Activated B cell treated with CpG ODN at 0.5 μM for 24 hours (primary cell): ENCODE measurements at regions of chr13 and their contacts with region 1.

Region 1: GRCh38 chr13:48769107-48769704 is 115.5 kb downstream of the CYSLTR2 start:
- DNase-seq: peak; percentile 25
- ATAC-seq: peak; percentile 100
- H3K4me3 Mint-ChIP-seq: no peak overlapping the region
- H3K27ac Mint-ChIP-seq: no peak overlapping the region
- H3K4me1 Mint-ChIP-seq: peaks cover 2% of the 10 kb centered on the region
- H3K27me3 Mint-ChIP-seq: peaks cover 17% of the 10 kb centered on the region
- CTCF ChIP-seq: peak; percentile 38

Region 2: DNA sequence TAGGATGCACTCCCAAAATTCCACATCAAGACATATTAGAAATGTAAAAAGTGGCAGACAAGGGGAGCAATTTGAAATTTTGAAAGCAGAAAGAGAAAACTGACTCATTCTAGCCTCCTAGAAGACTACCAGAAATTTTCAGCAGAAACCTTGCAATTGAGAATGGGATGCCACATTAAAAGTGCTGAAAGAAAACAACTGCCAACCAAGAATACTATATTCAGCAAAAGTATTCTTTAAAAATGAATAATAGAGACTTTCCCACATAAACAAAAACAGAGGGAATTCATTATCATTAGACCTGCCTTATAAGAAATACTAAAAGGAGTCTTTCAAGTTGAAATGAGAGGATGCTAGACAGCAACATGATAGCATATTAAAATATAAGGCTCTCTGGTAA is 1794.0 kb before region 1 on chr13:
- CTCF ChIA-PET with region 1: interaction called, 9 read pairs
- POLR2A ChIA-PET with region 1: no interaction called
- intact Hi-C with region 1: loop called (anchors 1 kb)
- DNase-seq: no peak
- ATAC-seq: no peak
- H3K4me3 Mint-ChIP-seq: no peak overlapping the region
- H3K27ac Mint-ChIP-seq: no peak overlapping the region
- H3K4me1 Mint-ChIP-seq: peaks cover 8% of the 10 kb centered on the region
- H3K27me3 Mint-ChIP-seq: no peaks in the 10 kb centered on the region
- CTCF ChIP-seq: no peak

Region 3: GRCh38 chr13:47798906-47799305 is 970.3 kb before region 1 on chr13:
- CTCF ChIA-PET with region 1: no interaction called
- POLR2A ChIA-PET with region 1: no interaction called
- intact Hi-C with region 1: loop called (anchors 2 kb)
- DNase-seq: no peak
- ATAC-seq: no peak
- H3K4me3 Mint-ChIP-seq: no peak overlapping the region
- H3K27ac Mint-ChIP-seq: no peak overlapping the region
- H3K4me1 Mint-ChIP-seq: no peaks in the 10 kb centered on the region
- H3K27me3 Mint-ChIP-seq: no peaks in the 10 kb centered on the region
- CTCF ChIP-seq: no peak

Region 4: DNA sequence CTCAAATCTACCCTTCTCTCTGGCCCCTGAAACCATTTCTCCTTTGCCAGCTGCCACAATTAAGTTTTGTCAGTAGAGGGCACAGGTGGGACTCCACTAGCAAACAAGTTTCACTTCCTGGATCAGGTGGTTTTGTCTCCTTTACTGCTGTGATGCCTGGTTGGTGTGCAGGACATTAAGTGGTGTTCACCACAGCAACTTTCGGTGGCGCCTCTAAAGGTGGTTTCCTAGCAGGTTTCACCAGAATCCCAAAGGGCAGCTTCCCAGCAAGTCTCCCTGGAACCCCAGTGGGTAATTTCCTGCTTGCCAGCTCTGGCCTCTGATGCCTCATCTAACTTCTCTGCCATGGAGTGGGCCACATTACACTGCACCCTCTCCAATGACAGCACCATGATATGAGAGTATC is 691.0 kb before region 1 on chr13:
- CTCF ChIA-PET with region 1: interaction called, 10 read pairs
- POLR2A ChIA-PET with region 1: interaction called, 7 read pairs
- intact Hi-C with region 1: loop called (anchors 1 kb)
- DNase-seq: peak; percentile 24
- ATAC-seq: peak; percentile 100
- H3K4me3 Mint-ChIP-seq: no peak overlapping the region
- H3K27ac Mint-ChIP-seq: peak overlapping the region; percentile 61
- H3K4me1 Mint-ChIP-seq: peaks cover 10% of the 10 kb centered on the region
- H3K27me3 Mint-ChIP-seq: no peaks in the 10 kb centered on the region
- CTCF ChIP-seq: no peak

Region 5: DNA sequence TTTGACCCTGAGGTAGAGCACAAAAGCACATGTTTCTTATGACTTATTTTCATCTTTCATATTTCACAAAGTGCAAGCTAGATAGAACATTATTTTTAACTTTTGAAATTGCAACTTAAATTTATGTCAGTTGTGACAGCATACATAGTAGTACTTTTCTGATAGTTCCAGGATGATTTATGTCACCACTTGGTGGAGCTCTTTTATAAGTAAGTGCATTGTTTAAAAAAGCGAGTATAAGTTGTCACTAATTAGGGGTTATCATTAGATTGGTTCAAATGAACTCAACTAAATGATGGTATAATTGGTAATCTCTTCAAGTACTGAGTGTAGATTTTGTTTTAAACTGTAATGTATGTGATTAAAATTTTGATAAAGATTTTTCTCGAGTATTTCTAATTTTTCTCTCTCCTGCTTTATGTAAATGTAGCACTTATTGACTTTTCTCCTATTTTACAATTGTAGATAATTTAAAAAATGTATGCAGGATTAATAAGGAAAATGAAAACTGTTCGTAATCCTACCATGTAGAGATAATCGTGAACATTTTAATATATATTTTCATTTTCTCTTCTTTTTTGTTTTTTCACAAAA is 434.6 kb before region 1 on chr13:
- CTCF ChIA-PET with region 1: interaction called, 10 read pairs
- POLR2A ChIA-PET with region 1: no interaction called
- intact Hi-C with region 1: loop called (anchors 1 kb)
- DNase-seq: no peak
- ATAC-seq: peak; percentile 37
- H3K4me3 Mint-ChIP-seq: no peak overlapping the region
- H3K27ac Mint-ChIP-seq: no peak overlapping the region
- H3K4me1 Mint-ChIP-seq: peaks cover 17% of the 10 kb centered on the region
- H3K27me3 Mint-ChIP-seq: no peaks in the 10 kb centered on the region
- CTCF ChIP-seq: peak; percentile 42

Region 6: DNA sequence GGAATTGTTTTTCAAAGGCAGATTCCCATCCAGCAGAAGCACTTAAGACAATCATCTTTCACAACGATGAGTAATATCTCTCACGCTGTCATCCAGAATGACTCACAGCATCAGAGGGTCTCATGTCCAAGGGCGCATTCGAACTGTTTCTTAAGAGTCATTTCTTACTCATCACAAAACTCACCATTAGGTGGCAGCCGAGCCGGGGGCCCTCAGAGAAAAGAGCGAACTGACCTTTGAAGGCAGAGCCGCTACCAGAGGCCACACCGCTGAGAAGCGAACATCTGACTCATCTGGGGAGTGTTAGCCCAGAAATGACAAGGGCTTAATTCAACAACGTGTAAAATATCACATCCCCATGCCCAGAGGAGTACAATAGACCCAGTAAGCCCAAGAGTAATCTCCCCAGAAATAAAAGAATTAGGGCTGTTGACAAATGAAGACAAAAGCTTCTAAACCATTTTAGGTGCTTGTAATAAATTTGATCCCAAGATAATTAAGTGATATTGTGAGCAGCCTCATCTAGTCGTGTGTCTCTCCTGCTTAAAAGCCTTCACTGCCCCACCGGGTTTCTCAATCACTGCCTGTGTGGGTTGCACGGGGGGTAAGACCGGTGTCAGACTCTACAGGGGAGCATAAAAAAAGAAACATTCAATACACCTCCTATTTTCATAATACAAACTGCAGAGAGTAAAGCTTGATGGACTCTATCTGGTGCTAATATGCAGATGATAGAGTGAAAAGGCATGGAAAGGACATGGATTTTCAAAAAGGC is 19.3 kb before region 1 on chr13:
- CTCF ChIA-PET with region 1: interaction called, 3 read pairs
- POLR2A ChIA-PET with region 1: no interaction called
- intact Hi-C with region 1: loop called (anchors 1 kb)
- DNase-seq: no peak
- ATAC-seq: peak; percentile 92
- H3K4me3 Mint-ChIP-seq: no peak overlapping the region
- H3K27ac Mint-ChIP-seq: no peak overlapping the region
- H3K4me1 Mint-ChIP-seq: peaks cover 6% of the 10 kb centered on the region
- H3K27me3 Mint-ChIP-seq: peaks cover 5% of the 10 kb centered on the region
- CTCF ChIP-seq: no peak